ENCODE measurements at regions of chr21 and their contacts with region 1.

Region 1: DNA sequence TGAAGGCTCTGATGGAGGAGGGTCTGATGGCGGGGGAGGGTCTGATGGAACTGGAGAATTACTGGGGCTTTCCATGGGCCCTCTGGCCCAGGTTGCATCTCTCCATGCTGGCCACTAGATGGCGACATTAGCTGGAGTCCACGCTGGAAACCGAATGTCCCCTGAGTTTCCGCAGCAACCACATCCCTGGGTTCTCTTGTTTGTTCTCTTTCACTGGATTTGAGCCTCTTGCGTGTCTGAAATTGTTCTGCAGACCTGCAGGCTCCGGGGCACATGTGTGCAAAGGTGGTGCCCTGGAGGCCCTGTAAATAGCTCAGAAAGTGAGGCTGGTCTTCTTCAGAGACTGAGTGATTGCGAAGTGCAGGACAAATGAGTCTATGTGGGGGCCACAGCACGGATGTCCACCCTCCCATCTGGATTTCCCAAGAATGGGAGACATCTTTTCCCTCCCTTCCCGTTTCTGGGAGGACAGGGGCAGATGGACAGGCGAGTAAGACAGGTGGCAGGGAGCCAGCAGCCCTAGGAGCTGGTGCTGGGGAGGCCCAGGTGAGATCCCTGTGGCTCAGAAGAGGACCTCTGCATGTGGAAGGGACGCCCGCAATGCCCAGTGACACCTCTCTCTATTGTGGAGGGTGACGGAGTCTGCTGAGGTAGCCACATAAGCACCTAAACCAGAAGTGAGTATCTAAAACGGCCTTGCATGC is 73.2 kb upstream of the ABCG1 start:
- DNase-seq: peak; percentile 33 to 90 (median 72)

Region 2: GRCh38 chr21:42449296-42449927 is 303.7 kb after region 1 on chr21:
- intact Hi-C with region 1: loop called (anchors 5 kb)
- DNase-seq: no peak

Measured in head of caudate nucleus (tissue), 42 donors.